Activated CD4-positive, alpha-beta T cell treated with anti-CD3 and anti-CD28 coated beads, Interleukin-2, amount 10 ng/mL, durations not matched to agents 24 days and 14 days (primary cell): ENCODE measurements at regions of chr13 and their contacts with region 1.

Region 1: DNA sequence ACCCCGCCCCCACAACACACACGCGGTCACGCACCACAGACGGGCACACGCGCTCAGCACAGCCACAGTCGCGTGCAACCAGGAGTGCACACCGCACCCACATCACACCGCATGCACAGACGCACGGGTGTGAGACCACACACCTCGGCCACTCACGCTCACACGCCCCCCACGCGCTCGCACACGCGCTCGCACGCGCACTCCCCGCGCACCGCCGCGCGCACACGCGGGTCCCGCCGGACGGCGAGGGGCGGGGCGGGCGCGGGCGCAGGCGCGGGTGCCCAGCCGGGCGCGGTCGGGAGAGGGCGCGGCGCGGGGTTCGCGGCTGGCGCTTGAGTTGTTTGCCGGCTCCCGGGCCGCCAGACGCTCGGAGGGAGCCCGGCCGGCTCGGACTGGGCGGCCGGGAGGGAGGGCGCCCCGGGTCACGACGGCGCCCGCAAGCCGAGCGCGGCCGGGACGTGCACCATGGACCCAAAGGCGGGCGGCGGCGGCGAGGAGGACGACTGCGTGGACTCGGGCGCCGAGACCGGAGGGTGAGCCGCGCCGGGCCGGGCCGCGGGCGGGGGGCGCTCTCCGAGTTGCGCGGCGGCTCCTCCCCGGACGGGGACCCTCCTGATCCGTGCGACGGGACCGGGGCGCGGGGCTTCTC is at the start of gene FAM124A:
- DNase-seq: peak; percentile 89
- H3K4me3 Mint-ChIP-seq: peak within 1 kb of the TSS; percentile 80
- H3K27ac Mint-ChIP-seq: peak within 1 kb of the TSS; percentile 51
- H3K4me1 Mint-ChIP-seq: peaks cover 3% of the 10 kb centered on the region
- H3K27me3 Mint-ChIP-seq: peaks cover 56% of the 10 kb centered on the region
- total RNA-seq, gene FAM124A: 0.82 and 1.1 TPM in 2 replicates

Region 2: DNA sequence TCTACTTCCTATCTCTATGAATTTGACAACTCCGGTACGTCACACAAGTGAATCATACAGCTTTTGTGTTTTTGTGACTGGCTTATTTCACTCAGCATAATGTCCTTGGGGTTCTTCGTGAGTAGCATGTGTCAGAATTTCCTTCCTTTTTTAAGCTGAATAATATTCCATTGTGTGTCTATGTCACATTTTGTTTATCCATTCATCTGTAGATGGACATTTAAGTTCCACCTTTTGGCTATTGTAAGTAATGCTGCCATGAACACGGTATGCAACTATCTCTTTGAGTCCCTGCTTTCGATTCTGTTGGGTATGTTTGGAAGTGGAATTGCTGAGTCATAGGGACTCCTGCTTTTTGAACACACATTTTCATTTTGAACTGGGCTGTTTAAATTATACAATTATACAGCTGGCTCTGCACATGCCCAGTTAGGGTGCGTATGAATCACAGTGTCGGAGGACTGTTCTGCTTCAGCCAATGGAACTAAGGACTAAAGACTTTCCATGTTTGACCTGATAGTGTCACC is 68.1 kb before region 1 on chr13:
- intact Hi-C with region 1: loop called (anchors 2 kb)
- DNase-seq: peak; percentile 58
- H3K4me3 Mint-ChIP-seq: peak overlapping the region; percentile 21
- H3K27ac Mint-ChIP-seq: peak overlapping the region; percentile 83
- H3K4me1 Mint-ChIP-seq: peaks cover 15% of the 10 kb centered on the region
- H3K27me3 Mint-ChIP-seq: peaks cover 8% of the 10 kb centered on the region

Region 3: GRCh38 chr13:51797664-51798488 is 575.7 kb after region 1 on chr13:
- intact Hi-C with region 1: loop called (anchors 5 kb)
- DNase-seq: peak; percentile 89
- H3K4me3 Mint-ChIP-seq: no peak overlapping the region
- H3K27ac Mint-ChIP-seq: no peak overlapping the region
- H3K4me1 Mint-ChIP-seq: peaks cover 35% of the 10 kb centered on the region
- H3K27me3 Mint-ChIP-seq: no peaks in the 10 kb centered on the region